Activated CD8-positive, alpha-beta memory T cell treated with anti-CD3 and anti-CD28 coated beads, Interleukin-2, amount 10 ng/mL, durations not matched to agents 7 days and 5 days (primary cell): ENCODE measurements at regions of chr19 and their contacts with region 1.

Region 1: GRCh38 chr19:15555759-15556633 is 47.7 kb downstream of the CYP4F22 start:
- DNase-seq: peak; percentile 98
- ATAC-seq: peak; percentile 84
- H3K4me3 Mint-ChIP-seq: peak overlapping the region; percentile 78
- H3K27ac Mint-ChIP-seq: peak overlapping the region; percentile 81
- H3K4me1 Mint-ChIP-seq: peaks cover 24% of the 10 kb centered on the region
- H3K27me3 Mint-ChIP-seq: peaks cover 3% of the 10 kb centered on the region

Region 2: GRCh38 chr19:15379083-15379995 is 176.7 kb before region 1 on chr19 and contains the start of gene AKAP8:
- CTCF ChIA-PET with region 1: interaction called, 19 read pairs
- DNase-seq: peak; percentile 98
- ATAC-seq: peak; percentile 88
- H3K4me3 Mint-ChIP-seq: peak within 1 kb of the TSS; percentile 84
- H3K27ac Mint-ChIP-seq: peak within 1 kb of the TSS; percentile 100
- H3K4me1 Mint-ChIP-seq: peaks cover 41% of the 10 kb centered on the region
- H3K27me3 Mint-ChIP-seq: no peaks in the 10 kb centered on the region
- total RNA-seq, gene AKAP8: 55.6 to 59.0 TPM

Region 3: DNA sequence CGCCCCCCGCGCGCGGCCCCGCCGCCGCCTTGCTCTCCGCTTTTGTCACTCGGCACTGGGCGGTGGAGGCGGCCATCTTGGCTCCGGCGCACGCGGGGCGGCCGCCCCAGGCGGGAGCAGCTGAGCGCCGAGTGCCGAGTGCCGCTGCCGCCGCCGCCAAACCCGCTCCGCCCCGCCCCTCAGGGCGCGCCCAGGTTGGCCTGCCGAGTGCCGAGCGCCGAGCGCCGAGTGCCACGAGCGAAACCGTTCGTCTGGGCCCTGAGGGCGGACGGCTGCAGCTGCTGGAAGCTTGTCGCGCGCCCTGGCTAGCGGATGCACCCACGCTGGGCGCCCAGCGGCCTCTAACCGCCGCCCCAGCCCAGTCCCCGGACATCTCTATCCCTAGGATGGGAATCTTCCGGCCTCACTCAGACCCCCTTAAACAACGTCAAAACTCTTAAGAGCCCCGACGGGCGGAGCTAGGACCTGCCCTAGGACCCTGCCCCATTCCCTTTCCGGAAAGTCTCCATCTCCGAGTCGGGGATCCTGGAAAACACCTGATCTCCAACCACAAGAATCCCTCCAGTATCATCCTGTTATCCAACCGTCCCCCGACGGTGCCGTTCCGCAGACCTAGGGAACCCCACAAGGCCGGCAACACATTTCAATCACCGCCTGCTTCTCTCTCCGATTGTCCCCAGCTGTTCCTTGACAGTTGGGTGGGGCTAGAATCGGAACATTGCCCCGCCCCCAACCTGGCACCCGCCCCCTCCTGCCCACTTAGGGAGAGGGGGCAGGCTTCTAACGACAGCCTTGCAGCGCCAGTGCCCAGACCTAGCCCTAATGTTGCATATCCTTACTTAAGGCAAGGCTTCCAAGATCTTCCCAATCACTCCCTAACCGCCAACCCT is 123.1 kb before region 1 on chr19:
- CTCF ChIA-PET with region 1: interaction called, 16 read pairs
- DNase-seq: peak; percentile 95
- ATAC-seq: peak; percentile 92
- H3K4me3 Mint-ChIP-seq: peak overlapping the region; percentile 93
- H3K27ac Mint-ChIP-seq: peak overlapping the region; percentile 95
- H3K4me1 Mint-ChIP-seq: peaks cover 36% of the 10 kb centered on the region
- H3K27me3 Mint-ChIP-seq: no peaks in the 10 kb centered on the region

Region 4: GRCh38 chr19:15443838-15444237 is 112.2 kb before region 1 on chr19:
- CTCF ChIA-PET with region 1: no interaction called
- DNase-seq: no peak
- ATAC-seq: no peak
- H3K4me3 Mint-ChIP-seq: no peak overlapping the region
- H3K27ac Mint-ChIP-seq: no peak overlapping the region
- H3K4me1 Mint-ChIP-seq: peaks cover 3% of the 10 kb centered on the region
- H3K27me3 Mint-ChIP-seq: no peaks in the 10 kb centered on the region

Region 5: GRCh38 chr19:15466851-15467733 is 88.9 kb before region 1 on chr19:
- CTCF ChIA-PET with region 1: interaction called, 68 read pairs
- DNase-seq: peak; percentile 91
- ATAC-seq: peak; percentile 63
- H3K4me3 Mint-ChIP-seq: peak overlapping the region; percentile 39
- H3K27ac Mint-ChIP-seq: peak overlapping the region; percentile 87
- H3K4me1 Mint-ChIP-seq: peaks cover 62% of the 10 kb centered on the region
- H3K27me3 Mint-ChIP-seq: peaks cover 6% of the 10 kb centered on the region